Gastrocnemius medialis (tissue), 4 donors: ENCODE measurements at regions of chr5 and their contacts with region 1.

Region 1: GRCh38 chr5:96614110-96614691 is 48.0 kb upstream of the CAST start:
- DNase-seq: peak; percentile 42 to 57
- ATAC-seq: peak; percentile 97 to 99
- H3K4me3 ChIP-seq: no peak overlapping the region
- H3K27ac ChIP-seq: peak overlapping the region; percentile 46 to 75 (median 60)
- H3K4me1 ChIP-seq: peaks cover 4 to 16% of the 10 kb centered on the region in 2 donors
- H3K27me3 ChIP-seq: no peaks in the 10 kb centered on the region
- CTCF ChIP-seq: peak; percentile 61 to 76 (median 64)
- POLR2A ChIP-seq: no peak

Region 2: DNA sequence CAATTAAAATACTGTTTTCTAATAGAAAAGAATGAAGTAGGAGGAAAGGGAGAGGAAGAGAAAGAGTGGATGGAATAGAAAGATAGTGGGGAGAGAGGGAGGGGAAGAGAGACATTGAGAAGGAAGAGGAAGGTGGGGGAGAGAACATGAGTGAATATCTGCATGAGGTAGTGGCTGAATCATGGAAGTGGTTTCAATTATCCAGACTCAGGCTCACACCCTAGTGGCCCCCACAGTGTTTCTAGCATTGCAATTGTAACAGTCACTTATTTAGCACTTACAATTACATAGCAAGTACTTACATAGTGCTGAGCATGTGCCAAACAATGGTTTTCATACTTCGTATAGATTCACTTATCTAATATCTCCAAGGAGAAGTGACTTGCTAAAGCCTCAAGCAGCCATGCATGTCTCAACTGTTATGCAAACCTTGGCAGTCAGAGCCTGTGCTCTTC is 120.7 kb after region 1 on chr5:
- in situ Hi-C with region 1: no loop called
- intact Hi-C with region 1: loop called (anchors 10 kb)
- DNase-seq: no peak
- ATAC-seq: no peak
- H3K4me3 ChIP-seq: no peak overlapping the region
- H3K27ac ChIP-seq: peak overlapping the region; percentile 11 to 58 (median 54)
- H3K4me1 ChIP-seq: peaks cover 21 to 25% of the 10 kb centered on the region in 2 donors
- H3K27me3 ChIP-seq: no peaks in the 10 kb centered on the region
- CTCF ChIP-seq: no peak
- POLR2A ChIP-seq: no peak

Region 3: DNA sequence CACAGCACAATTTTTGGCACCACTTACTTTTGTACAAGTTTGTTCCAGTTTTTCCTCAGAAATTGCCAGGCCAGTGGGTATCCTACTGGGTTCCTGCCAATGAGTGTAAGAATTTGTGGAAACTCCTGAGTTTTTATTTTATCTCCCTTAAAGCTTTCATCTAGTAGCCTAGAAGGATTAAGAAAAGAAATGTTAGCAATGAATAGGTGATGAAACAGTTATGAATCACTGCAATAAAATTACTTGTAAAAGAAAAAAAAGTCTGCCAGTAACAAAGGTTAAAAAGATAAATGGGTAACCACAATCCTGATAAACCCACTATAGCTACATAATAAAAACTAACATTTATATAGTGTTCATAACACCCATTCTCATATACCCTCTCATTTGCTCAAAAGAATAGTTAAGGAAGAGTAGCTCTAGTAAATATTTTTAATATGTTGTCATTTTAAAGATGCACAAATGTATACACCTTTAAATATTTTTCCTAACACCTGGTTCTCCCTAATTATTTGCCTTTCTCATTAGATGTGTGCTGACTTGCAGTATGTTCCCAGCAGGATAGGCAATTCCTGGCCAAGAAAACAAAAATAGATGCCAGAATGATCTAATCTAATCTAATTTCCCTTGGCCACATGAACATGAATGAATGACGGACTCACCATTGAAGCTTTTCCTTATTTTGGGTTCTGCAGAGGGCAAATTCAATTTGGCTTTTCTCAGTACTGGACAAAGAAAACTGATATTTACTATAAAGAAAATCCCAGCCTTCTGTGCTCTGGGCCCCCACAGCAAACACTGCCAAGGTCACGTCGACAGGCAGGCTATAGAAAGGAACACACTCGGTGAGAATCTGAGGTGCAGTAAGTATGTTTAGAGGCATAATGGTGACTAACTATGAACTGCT is 167.1 kb after region 1 on chr5:
- in situ Hi-C with region 1: no loop called
- intact Hi-C with region 1: no loop called
- DNase-seq: no peak
- ATAC-seq: no peak
- H3K4me3 ChIP-seq: no peak overlapping the region
- H3K27ac ChIP-seq: peak overlapping the region in 1 of 4 donors; percentile 3
- H3K4me1 ChIP-seq: no peaks in the 10 kb centered on the region
- H3K27me3 ChIP-seq: no peaks in the 10 kb centered on the region
- CTCF ChIP-seq: no peak
- POLR2A ChIP-seq: no peak